ENCODE measurements at regions of chr11 and their contacts with region 1.

Region 1: DNA sequence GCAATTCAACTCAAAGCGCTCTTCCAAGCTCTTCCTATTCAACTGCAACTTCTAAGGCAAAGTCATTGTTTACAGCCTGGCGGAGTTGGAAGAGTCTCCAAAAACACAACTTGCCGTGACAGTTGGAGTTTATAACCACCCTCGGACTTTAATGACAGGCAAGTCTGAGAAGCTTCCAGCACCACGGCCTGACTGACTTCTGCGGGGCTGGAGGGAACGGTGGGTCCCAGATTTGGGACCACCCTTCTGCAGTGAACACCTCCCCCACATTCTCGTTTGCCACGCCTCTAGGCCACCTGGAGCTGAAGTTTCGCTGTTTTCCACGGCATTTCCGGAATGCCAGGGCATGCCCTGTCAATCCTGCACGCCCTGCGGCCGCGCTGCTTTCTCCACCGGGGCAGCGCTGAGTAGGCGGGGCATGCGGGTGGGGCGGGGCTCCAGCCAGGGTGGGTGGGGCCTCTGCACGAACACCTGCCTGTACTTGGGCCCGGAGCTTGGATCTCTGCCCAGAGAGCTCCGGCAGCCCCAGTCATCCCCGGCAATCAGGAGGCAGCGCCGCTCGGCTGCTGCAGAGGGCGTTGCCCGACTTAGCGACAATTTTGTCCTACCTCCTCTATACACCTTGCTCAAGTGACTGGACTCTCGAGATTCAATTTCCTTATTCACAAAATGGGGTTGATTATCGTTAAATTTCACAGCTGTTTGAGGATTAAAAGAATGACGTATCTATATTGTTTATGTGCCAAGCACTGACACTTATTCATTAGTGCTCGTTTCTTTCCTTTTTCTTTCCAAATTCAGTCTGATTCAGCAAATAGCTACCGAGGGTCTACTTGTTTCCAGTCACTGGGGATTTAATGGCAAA is 48.7 kb upstream of the BIRC3 start:
- DNase-seq: peak; percentile 82
- ATAC-seq: peak; percentile 96 to 98

Region 2: GRCh38 chr11:102061276-102061675 is 207.3 kb before region 1 on chr11:
- intact Hi-C with region 1: loop called in 1 of 2 experiments (anchors 5 kb)
- DNase-seq: no peak
- ATAC-seq: peak in 1 of 2 donors; percentile 49

Region 3: DNA sequence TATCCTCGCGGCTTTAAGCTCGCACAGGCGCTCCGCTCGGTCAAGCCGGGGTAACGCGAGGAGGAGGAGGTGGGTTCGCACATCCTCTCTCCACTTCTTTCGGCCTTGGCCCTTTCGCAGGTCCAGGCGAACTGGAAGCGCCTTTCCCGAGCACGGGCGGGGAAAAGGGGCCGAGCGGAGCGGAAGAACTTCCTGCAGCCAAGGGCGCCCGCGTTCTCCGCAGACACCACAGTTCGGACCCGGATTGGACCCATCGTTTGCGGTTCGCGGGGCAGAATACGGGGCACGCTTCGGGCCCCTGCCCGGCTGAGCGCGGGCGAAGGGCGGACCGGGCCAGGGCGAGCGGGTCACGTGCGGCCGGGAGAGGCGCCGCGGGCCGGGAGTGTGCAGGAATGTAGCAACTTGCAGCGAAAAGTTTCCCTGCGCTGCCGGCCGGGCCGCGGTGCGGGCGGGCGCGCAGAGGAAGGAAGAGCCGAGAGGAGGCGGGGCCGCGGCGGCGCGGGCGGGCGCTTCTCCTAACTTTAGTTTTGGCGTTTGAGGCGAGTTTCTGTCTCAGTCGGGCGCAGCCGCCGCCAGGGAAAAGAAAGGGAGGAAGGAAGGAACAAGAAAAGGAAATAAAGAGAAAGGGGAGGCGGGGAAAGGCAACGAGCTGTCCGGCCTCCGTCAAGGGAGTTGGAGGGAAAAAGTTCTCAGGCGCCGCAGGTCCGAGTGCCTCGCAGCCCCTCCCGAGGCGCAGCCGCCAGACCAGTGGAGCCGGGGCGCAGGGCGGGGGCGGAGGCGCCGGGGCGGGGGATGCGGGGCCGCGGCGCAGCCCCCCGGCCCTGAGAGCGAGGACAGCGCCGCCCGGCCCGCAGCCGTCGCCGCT is 158.4 kb before region 1 on chr11 and contains the start of gene YAP1:
- intact Hi-C with region 1: loop called in 1 of 2 experiments (anchors 10 kb)
- DNase-seq: peak; percentile 91
- ATAC-seq: peak; percentile 90
- total RNA-seq, gene YAP1: 59.1 to 67.5 TPM

Measured in left cardiac atrium (tissue), 4 donors.